Left lung (tissue), 14 donors: ENCODE measurements at regions of chr15 and their contacts with region 1.

Region 1: DNA sequence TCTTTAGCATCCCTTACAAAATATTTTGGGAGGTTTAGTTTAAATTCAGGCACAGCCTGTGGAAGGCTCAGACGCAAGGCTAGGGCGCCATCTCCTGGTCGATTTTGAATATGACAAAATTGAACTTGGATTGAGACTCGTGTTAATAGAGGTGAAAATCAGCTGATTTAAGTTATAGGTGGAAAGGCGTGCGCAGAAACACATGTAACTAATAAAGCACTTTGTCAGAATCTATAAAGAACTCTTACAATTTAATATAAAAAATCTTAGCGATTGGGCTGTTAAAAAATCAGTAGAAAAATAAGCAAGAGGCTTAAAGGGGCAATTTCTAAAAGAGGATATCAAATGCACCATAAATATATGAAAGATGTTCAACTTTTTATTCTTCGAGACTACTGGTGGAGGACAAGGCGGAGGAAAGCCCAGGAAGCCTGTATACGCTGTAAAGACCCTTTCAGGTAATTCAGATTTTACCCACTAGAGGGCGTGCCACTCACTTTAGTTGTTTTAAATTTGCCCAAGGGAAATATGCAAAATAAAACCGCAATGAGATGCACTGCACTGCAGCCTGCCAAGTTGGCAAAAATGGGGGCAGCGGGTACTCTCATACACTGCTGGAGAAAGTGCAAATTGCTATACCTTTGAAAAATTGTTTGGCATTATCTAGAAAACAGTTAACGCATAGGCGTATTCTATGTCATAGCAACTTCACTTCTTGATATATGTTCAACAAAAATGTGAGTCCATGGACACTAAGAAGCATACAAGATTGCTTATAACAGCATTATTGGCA is 64.7 kb downstream of the SLC30A4 start:
- DNase-seq: peak in 3 of 4 donors; percentile 55 to 82 (median 77)
- ATAC-seq: peak; percentile 83
- H3K4me3 ChIP-seq: peak overlapping the region; percentile 32 to 39
- H3K27ac ChIP-seq: peak overlapping the region; percentile 82 to 83
- H3K4me1 ChIP-seq: peaks cover 6 to 55% of the 10 kb centered on the region in 2 donors
- H3K27me3 ChIP-seq: peaks cover 0 to 3% of the 10 kb centered on the region in 2 donors
- CTCF ChIP-seq: peak; percentile 70 to 89

Region 2: GRCh38 chr15:45611305-45611704 is 153.5 kb after region 1 on chr15:
- intact Hi-C with region 1: loop called in 1 of 2 experiments (anchors 5 kb)
- DNase-seq: no peak
- ATAC-seq: no peak
- H3K4me3 ChIP-seq: no peak overlapping the region
- H3K27ac ChIP-seq: no peak overlapping the region
- H3K4me1 ChIP-seq: no peaks in the 10 kb centered on the region
- H3K27me3 ChIP-seq: no peaks in the 10 kb centered on the region
- CTCF ChIP-seq: peak; percentile 18 to 27

Region 3: GRCh38 chr15:45790325-45790943 is 332.6 kb after region 1 on chr15:
- intact Hi-C with region 1: no loop called
- DNase-seq: peak in 1 of 4 donors; percentile 21
- ATAC-seq: peak; percentile 51
- H3K4me3 ChIP-seq: no peak overlapping the region
- H3K27ac ChIP-seq: no peak overlapping the region
- H3K4me1 ChIP-seq: no peaks in the 10 kb centered on the region
- H3K27me3 ChIP-seq: peaks cover 0 to 19% of the 10 kb centered on the region in 2 donors
- CTCF ChIP-seq: peak in 1 of 2 donors; percentile 29